AG04449 (cell line): ENCODE measurements at regions of chr12 and their contacts with region 1.

Region 1: GRCh38 chr12:111298582-111299436 is 70.1 kb downstream of the PHETA1 start:
- DNase-seq: no peak
- H3K4me3 ChIP-seq: no peak overlapping the region
- CTCF ChIP-seq: peak; percentile 85

Region 2: GRCh38 chr12:110639336-110640141 is 659.3 kb before region 1 on chr12:
- CTCF ChIA-PET with region 1: no interaction called
- POLR2A ChIA-PET with region 1: no interaction called
- DNase-seq: peak; percentile 23
- H3K4me3 ChIP-seq: no peak overlapping the region
- CTCF ChIP-seq: no peak

Region 3: GRCh38 chr12:110896559-110896958 is 402.2 kb before region 1 on chr12:
- CTCF ChIA-PET with region 1: interaction called, 45 read pairs
- POLR2A ChIA-PET with region 1: no interaction called
- DNase-seq: no peak
- H3K4me3 ChIP-seq: no peak overlapping the region
- CTCF ChIP-seq: no peak

Region 4: GRCh38 chr12:110937104-110937641 is 361.6 kb before region 1 on chr12:
- CTCF ChIA-PET with region 1: interaction called, 15 read pairs
- POLR2A ChIA-PET with region 1: no interaction called
- DNase-seq: no peak
- H3K4me3 ChIP-seq: no peak overlapping the region
- CTCF ChIP-seq: peak; percentile 93

Region 5: DNA sequence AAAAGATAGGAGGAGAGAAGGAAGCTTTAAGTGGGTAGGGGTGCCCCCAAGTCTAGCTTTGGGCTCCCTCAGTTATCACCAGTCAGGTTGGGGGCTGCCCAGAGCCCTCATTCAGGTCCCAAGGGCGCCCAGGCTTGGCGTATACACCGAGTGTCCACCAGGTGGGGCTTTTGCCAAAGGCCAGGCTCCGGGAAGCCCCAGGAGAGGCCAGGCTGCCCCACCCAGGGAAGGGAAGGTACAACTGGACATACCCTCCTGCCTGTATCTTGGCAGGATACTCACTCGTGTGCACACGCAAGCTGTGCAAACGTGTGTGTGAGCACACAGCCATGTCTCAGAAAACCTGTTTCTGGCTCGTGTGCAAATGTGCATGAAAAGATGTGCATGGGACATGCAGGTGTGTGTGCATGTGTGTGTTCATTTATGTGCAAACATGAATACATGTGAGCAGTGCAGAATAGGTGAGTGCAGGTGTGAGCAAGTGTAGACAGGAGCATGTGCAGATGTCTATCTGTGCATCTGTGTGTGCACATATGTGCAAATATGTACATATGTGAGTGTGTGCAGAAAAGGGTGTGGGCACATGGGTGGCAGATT is 274.5 kb before region 1 on chr12:
- CTCF ChIA-PET with region 1: interaction called, 17 read pairs
- POLR2A ChIA-PET with region 1: no interaction called
- DNase-seq: no peak
- H3K4me3 ChIP-seq: no peak overlapping the region
- CTCF ChIP-seq: peak; percentile 68

Region 6: GRCh38 chr12:111076611-111077451 is 222.0 kb before region 1 on chr12:
- CTCF ChIA-PET with region 1: no interaction called
- POLR2A ChIA-PET with region 1: no interaction called
- DNase-seq: no peak
- H3K4me3 ChIP-seq: no peak overlapping the region
- CTCF ChIP-seq: no peak

Region 7: DNA sequence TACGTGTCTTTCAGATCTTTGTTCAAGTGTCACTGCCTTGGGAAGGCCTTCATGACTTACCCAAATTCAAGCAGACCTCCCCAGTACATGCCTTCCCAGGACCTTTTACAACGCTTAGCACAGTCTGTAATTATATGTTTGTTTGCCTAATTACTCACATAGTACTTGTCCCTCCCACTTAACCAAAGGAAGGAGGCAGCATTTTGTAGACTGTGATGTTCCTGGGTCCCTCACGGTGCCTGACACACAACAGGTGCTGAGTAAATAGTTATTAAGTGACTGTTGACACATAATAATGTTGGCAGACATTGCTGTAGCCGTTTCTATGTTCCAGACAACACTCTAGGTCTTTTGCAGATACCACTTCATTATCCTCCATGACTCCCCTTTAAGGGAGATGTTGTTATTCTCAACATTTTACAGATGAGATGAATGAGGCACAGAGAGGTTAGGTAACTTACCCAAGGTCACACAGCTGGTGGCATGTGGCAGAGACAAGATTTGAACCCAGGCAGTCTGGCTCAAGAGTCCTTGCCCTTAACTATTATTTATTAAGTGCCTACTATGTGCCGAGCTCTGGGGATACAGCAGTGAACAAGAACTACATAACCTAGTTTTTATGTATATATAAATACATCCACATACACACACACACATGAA is 60.6 kb before region 1 on chr12:
- CTCF ChIA-PET with region 1: no interaction called
- POLR2A ChIA-PET with region 1: no interaction called
- DNase-seq: no peak
- H3K4me3 ChIP-seq: no peak overlapping the region
- CTCF ChIP-seq: no peak

Region 8: GRCh38 chr12:111288771-111289170 is 10.0 kb before region 1 on chr12:
- CTCF ChIA-PET with region 1: interaction called, 14 read pairs
- POLR2A ChIA-PET with region 1: no interaction called
- DNase-seq: no peak
- H3K4me3 ChIP-seq: no peak overlapping the region
- CTCF ChIP-seq: no peak

Region 9: GRCh38 chr12:111313833-111314259 is 15.0 kb after region 1 on chr12:
- CTCF ChIA-PET with region 1: interaction called, 40 read pairs
- POLR2A ChIA-PET with region 1: no interaction called
- DNase-seq: no peak
- H3K4me3 ChIP-seq: no peak overlapping the region
- CTCF ChIP-seq: peak; percentile 90